ENCODE measurements at regions of chr6 and their contacts with region 1.

Region 1: DNA sequence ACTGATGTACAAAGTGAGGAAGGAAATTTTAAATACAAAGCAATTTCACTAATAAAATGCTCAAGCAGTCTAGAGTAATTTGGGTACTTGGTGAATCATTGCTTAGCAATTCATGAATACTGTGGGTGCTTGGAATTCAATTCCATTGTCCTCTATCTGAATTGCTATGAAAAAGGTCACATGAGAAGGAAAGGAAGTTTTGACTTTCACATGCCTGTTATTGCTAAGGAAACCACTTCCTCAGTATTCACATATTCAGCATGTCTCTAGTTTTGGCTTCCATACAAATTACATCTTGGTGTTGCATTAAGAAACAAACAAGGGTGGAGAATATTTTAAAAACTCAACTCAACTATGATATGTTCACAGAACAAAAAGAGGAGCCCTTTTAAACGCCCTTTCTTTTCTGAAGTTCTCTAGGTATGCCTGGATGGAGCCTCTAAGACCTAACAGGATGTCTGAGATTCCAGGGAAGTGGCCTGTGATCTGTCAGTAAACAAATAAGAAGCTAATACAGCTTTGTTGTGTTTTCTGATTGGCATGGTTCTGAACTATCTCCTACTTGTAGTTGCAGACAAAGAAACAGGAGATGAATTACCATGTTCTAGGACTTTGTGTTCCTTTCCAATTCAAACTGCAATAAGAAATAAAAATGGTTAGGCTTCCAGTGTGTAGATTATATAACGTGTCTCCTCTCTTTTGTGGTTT is 190.4 kb downstream of the OGFRL1 start:
- DNase-seq: peak; percentile 44 to 96
- H3K4me3 ChIP-seq: no peak overlapping the region; the same call in 1 of the 2 replicates
- H3K27ac ChIP-seq: peak overlapping the region; percentile 82
- H3K4me1 ChIP-seq: peaks cover 31% of the 10 kb centered on the region
- H3K27me3 ChIP-seq: no peaks in the 10 kb centered on the region
- CTCF ChIP-seq: no peak

Region 2: GRCh38 chr6:71404145-71404966 is 74.6 kb before region 1 on chr6:
- CTCF ChIA-PET with region 1: no interaction called
- POLR2A ChIA-PET with region 1: no interaction called
- intact Hi-C with region 1: loop called (anchors 1 kb)
- DNase-seq: peak; percentile 41 to 96
- H3K4me3 ChIP-seq: peak overlapping the region; percentile 48
- H3K27ac ChIP-seq: peak overlapping the region; percentile 98
- H3K4me1 ChIP-seq: peaks cover 90% of the 10 kb centered on the region
- H3K27me3 ChIP-seq: no peaks in the 10 kb centered on the region
- CTCF ChIP-seq: no peak

Region 3: GRCh38 chr6:71420693-71421328 is 58.2 kb before region 1 on chr6:
- CTCF ChIA-PET with region 1: no interaction called
- POLR2A ChIA-PET with region 1: no interaction called
- intact Hi-C with region 1: loop called (anchors 5 kb)
- DNase-seq: peak; percentile 89 to 96
- H3K4me3 ChIP-seq: peak overlapping the region; percentile 81
- H3K27ac ChIP-seq: peak overlapping the region; percentile 48
- H3K4me1 ChIP-seq: peaks cover 30% of the 10 kb centered on the region
- H3K27me3 ChIP-seq: no peaks in the 10 kb centered on the region
- CTCF ChIP-seq: no peak

Region 4: DNA sequence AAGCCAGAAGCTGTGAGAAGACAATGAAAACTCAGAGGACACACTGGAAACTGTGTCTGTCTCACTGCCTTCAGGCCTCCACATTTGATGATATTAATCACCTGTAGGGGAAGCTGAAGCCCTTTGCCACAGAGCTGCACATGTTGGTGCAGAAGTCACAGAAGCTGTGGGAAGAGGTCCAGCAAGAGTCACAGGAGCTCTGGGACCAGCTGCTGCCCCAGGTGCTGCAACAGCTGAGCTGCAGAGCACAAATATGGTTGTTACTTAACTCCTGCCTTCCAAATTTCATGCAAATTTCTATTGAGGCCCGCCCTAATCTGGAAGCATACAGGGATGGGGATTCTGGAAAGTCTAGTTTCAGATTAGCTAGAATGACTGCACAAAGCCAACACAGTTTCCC is 21.1 kb before region 1 on chr6:
- CTCF ChIA-PET with region 1: no interaction called
- POLR2A ChIA-PET with region 1: no interaction called
- intact Hi-C with region 1: loop called (anchors 1 kb)
- DNase-seq: peak; percentile 39 to 46
- H3K4me3 ChIP-seq: no peak overlapping the region
- H3K27ac ChIP-seq: no peak overlapping the region
- H3K4me1 ChIP-seq: peaks cover 10% of the 10 kb centered on the region; the same call in 1 of the 2 replicates
- H3K27me3 ChIP-seq: no peaks in the 10 kb centered on the region
- CTCF ChIP-seq: no peak

Region 5: DNA sequence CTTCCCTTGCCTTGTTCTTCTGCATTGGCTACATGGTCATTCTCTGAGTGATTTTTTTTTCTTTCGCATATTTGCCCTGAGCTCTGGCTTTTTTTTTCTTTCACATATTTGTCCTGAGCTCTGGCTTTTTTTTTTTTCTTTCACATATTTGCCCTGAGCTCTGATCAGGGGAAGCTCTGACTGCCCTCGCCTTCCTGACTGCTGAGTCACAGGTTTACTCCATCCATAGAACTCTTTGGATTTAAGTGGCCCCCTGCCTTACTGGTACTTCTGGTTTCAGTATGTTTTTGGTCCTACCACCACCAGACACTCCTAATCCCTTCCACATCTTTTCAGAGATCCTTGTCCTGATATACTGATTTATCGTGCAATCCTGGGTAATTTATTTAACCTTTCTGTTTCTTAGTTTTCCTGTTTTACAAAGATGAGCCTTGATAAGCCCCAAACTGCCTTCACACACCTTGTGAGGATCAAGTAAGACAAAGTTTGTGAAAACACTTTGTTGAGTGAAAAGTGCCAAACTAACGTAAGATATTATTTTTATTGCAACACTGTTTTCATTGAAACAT is 10.8 kb after region 1 on chr6:
- CTCF ChIA-PET with region 1: interaction called, 3 read pairs
- POLR2A ChIA-PET with region 1: interaction called, 16 read pairs
- intact Hi-C with region 1: loop called (anchors 1 kb)
- DNase-seq: peak; percentile 83 to 98
- H3K4me3 ChIP-seq: no peak overlapping the region
- H3K27ac ChIP-seq: peak overlapping the region; percentile 81
- H3K4me1 ChIP-seq: peaks cover 25% of the 10 kb centered on the region
- H3K27me3 ChIP-seq: no peaks in the 10 kb centered on the region
- CTCF ChIP-seq: no peak

Measured in PC-9 (cell line).